CD4-positive, alpha-beta T cell (primary cell): ENCODE measurements at regions of chr17 and their contacts with region 1.

Region 1: GRCh38 chr17:61862975-61863800 is at the start of gene BRIP1:
- DNase-seq: peak; percentile 73 to 94 (median 81)
- ATAC-seq: peak; percentile 96
- H3K4me3 ChIP-seq: peak within 1 kb of the TSS; percentile 77
- H3K4me3 Mint-ChIP-seq: peak within 1 kb of the TSS; percentile 90
- H3K27ac ChIP-seq: peak within 1 kb of the TSS; percentile 39 to 59
- H3K27ac Mint-ChIP-seq: peak within 1 kb of the TSS; percentile 87
- H3K4me1 ChIP-seq: peaks cover 8% of the 10 kb centered on the region
- H3K4me1 Mint-ChIP-seq: peaks cover 31% of the 10 kb centered on the region
- H3K27me3 ChIP-seq: no peaks in the 10 kb centered on the region
- H3K27me3 Mint-ChIP-seq: no peaks in the 10 kb centered on the region
- CTCF ChIP-seq: no peak
- total RNA-seq, gene BRIP1: 1.0 to 1.9 TPM

Region 2: GRCh38 chr17:61904094-61904710 is 41.0 kb after region 1 on chr17:
- CTCF ChIA-PET with region 1: no interaction called
- POLR2A ChIA-PET with region 1: interaction called, 12 read pairs
- intact Hi-C with region 1: no loop called
- DNase-seq: peak in 8 of 14 experiments; percentile 7 to 80 (median 30)
- ATAC-seq: peak; percentile 83
- H3K4me3 ChIP-seq: peak overlapping the region; percentile 39
- H3K4me3 Mint-ChIP-seq: peak overlapping the region; percentile 77
- H3K27ac ChIP-seq: peak overlapping the region in 1 of 2 donors; percentile 49
- H3K27ac Mint-ChIP-seq: peak overlapping the region; percentile 85
- H3K4me1 ChIP-seq: peaks cover 5% of the 10 kb centered on the region
- H3K4me1 Mint-ChIP-seq: peaks cover 3% of the 10 kb centered on the region
- H3K27me3 ChIP-seq: no peaks in the 10 kb centered on the region
- H3K27me3 Mint-ChIP-seq: no peaks in the 10 kb centered on the region
- CTCF ChIP-seq: no peak

Region 3: GRCh38 chr17:61927200-61928165 is 64.3 kb after region 1 on chr17 and contains the start of gene INTS2:
- CTCF ChIA-PET with region 1: no interaction called
- POLR2A ChIA-PET with region 1: interaction called, 7 read pairs
- intact Hi-C with region 1: loop called (anchors 2 kb)
- DNase-seq: peak; percentile 91 to 98 (median 95)
- ATAC-seq: peak; percentile 84
- H3K4me3 ChIP-seq: peak within 1 kb of the TSS; percentile 62
- H3K4me3 Mint-ChIP-seq: peak within 1 kb of the TSS; percentile 94
- H3K27ac ChIP-seq: peak within 1 kb of the TSS; percentile 68 to 78
- H3K27ac Mint-ChIP-seq: peak within 1 kb of the TSS; percentile 93
- H3K4me1 ChIP-seq: peaks cover 18% of the 10 kb centered on the region
- H3K4me1 Mint-ChIP-seq: peaks cover 27% of the 10 kb centered on the region
- H3K27me3 ChIP-seq: no peaks in the 10 kb centered on the region
- H3K27me3 Mint-ChIP-seq: peaks cover 6% of the 10 kb centered on the region
- CTCF ChIP-seq: no peak
- total RNA-seq, gene INTS2: 8.5 to 8.7 TPM